Aorta (tissue), 5 donors: ENCODE measurements at regions of chr7 and their contacts with region 1.

Region 1: DNA sequence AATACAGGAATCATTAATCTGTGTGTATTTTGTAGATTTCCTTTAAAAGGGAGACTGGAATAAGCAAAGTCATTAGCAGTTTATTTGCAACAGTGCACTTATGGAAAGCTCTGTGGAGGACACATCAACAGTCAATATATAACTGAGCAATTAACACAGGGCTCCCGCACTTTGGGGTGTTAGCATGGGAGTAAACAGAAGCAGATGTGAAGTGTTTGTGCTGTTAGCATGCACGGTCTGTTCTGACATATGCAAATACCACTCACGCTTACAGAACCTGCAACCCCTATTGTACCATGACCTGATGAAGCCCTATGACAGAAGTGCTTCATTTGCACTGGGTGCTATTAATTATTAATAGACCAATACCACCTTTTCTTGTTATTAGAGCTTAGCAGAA is 118.9 kb downstream of the PPP1R3A start:
- DNase-seq: no peak
- ATAC-seq: no peak
- H3K4me3 ChIP-seq: no peak overlapping the region
- H3K27ac ChIP-seq: no peak overlapping the region
- H3K4me1 ChIP-seq: peaks cover 0 to 5% of the 10 kb centered on the region in 2 donors
- H3K27me3 ChIP-seq: no peaks in the 10 kb centered on the region

Region 2: DNA sequence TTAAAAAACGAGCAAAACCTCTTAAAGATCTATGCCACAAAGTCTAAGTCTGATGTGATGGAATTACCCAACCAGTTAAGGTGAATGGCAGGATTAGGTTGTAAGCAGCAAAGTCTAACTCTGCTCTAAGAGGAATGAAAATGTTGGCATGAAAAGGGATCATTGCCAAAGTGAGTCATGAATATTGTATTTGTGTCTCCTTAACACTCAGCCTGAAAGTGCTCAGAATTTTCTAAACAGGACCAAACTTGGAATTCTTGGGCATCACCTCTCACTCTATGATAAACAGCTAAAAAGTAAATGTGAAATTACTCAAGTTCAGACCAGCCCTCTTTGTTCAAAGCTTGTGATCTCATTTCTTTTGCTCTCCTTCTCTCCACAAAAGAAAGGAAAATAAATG is 91.9 kb after region 1 on chr7:
- intact Hi-C with region 1: loop called in 1 of 2 experiments (anchors 10 kb)
- DNase-seq: no peak
- ATAC-seq: no peak
- H3K4me3 ChIP-seq: no peak overlapping the region
- H3K27ac ChIP-seq: no peak overlapping the region
- H3K4me1 ChIP-seq: no peaks in the 10 kb centered on the region
- H3K27me3 ChIP-seq: no peaks in the 10 kb centered on the region